ENCODE measurements at regions of chr15 and their contacts with region 1.

Region 1: GRCh38 chr15:66401130-66402021 is 14.7 kb downstream of the MAP2K1 start:
- DNase-seq: peak; percentile 43
- ATAC-seq: peak; percentile 74
- H3K4me3 Mint-ChIP-seq: peak overlapping the region; percentile 50
- H3K27ac Mint-ChIP-seq: peak overlapping the region; percentile 69
- H3K4me1 Mint-ChIP-seq: peaks cover 75% of the 10 kb centered on the region
- H3K27me3 Mint-ChIP-seq: no peaks in the 10 kb centered on the region

Region 2: GRCh38 chr15:66415360-66415759 is 14.0 kb after region 1 on chr15:
- CTCF ChIA-PET with region 1: interaction called, 19 read pairs
- POLR2A ChIA-PET with region 1: no interaction called
- intact Hi-C with region 1: no loop called
- DNase-seq: no peak
- ATAC-seq: no peak
- H3K4me3 Mint-ChIP-seq: no peak overlapping the region
- H3K27ac Mint-ChIP-seq: no peak overlapping the region
- H3K4me1 Mint-ChIP-seq: peaks cover 68% of the 10 kb centered on the region
- H3K27me3 Mint-ChIP-seq: no peaks in the 10 kb centered on the region

Region 3: DNA sequence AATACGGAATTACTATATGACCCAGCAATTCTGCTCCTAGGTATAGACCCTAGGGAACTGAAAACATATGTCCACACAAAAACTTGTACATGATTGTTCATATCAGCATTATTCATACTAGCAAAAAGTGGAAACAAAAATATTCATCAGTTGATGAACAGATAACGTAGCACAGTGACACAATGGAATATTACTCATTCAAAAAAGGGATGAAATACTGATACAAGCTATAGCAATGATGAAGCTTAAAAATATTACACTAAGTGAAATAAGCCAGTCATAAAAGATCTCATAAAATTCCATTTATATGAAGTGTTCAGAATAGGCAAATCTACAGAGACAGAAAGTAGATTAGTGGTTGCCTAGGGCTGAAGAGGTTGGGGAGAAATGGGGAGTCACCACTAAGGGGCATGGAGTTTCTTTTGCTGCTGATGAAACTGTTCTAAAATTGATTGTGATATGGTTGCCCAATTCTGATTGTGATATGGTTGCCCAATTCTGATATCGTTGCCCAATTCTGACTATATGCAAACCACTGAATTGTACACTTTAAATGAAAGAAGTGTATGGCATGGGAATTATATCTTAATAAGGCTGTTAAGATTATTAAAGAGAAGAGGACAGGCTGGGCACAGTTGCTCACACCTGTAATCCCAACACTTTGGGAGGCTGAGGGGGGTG is 1130.1 kb after region 1 on chr15:
- CTCF ChIA-PET with region 1: no interaction called
- POLR2A ChIA-PET with region 1: no interaction called
- intact Hi-C with region 1: no loop called
- DNase-seq: no peak
- ATAC-seq: peak; percentile 91
- H3K4me3 Mint-ChIP-seq: no peak overlapping the region
- H3K27ac Mint-ChIP-seq: no peak overlapping the region
- H3K4me1 Mint-ChIP-seq: peaks cover 16% of the 10 kb centered on the region
- H3K27me3 Mint-ChIP-seq: no peaks in the 10 kb centered on the region